ENCODE measurements at regions of chr18 and their contacts with region 1.

Region 1: DNA sequence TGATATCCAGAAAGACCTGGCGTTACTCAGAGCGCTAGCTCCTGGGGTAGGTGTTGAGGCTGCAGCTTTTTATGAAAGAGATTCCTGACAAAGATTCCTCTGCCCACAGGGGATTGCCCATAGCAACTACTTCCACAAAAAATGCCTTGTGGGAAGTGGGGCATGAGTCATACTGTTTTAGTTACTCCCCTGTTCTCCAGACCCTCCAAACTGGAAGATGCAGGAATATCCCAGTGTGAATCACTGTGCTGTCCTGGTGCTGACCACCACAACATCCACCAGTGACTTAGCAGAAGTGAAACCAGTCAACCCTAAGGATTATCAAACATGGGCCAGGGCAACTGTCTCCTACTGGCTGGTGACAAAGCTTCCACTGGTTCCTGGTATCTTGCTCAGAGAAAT is 61.8 kb downstream of the CDH2 start:
- DNase-seq: peak; percentile 39 to 40
- H3K4me3 ChIP-seq: no peak overlapping the region
- H3K27ac ChIP-seq: peak overlapping the region; percentile 53
- H3K4me1 ChIP-seq: peaks cover 31% of the 10 kb centered on the region
- H3K27me3 ChIP-seq: no peaks in the 10 kb centered on the region
- CTCF ChIP-seq: no peak

Region 2: DNA sequence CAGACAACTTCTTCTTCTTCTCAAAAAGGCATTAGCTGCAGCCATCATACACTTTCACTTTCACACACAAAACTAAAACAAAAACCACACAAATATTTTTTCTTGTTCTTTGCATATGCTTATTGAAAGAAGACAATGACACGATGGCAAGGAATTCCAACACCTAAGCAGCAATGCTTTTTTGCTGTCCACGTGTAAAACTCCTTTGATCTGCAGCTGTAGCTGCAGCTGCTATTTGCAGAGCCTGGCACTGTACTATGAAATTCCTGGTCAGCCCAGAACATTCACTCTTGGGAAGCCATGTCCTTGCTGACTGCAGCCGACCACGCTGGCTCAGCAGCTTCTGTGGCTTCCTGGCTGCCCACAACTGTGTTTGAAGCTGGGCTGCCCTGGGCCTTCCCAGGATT is 254.4 kb before region 1 on chr18:
- CTCF ChIA-PET with region 1: no interaction called
- POLR2A ChIA-PET with region 1: no interaction called
- intact Hi-C with region 1: loop called (anchors 10 kb)
- DNase-seq: no peak
- H3K4me3 ChIP-seq: no peak overlapping the region
- H3K27ac ChIP-seq: no peak overlapping the region
- H3K4me1 ChIP-seq: no peaks in the 10 kb centered on the region
- H3K27me3 ChIP-seq: no peaks in the 10 kb centered on the region
- CTCF ChIP-seq: no peak

Region 3: DNA sequence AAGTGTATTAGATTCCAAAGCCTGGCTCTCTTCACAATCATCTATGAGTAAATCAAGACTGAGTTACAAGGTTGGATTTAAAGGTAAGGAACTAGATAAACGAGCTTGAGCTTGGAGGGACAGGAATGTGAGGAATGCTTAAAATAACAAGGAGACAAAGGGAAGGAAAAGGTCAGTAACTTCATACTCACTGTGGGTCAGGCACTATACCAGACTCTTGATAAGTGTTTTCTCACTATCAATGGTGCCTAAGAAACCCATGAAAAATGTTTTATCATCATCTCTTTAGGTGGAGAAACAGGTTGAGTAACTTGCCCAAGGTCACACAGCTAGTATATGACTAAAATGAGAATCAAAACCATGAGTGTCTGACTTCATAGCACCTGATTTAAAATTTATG is 150.3 kb before region 1 on chr18:
- CTCF ChIA-PET with region 1: no interaction called
- POLR2A ChIA-PET with region 1: no interaction called
- intact Hi-C with region 1: loop called (anchors 10 kb)
- DNase-seq: peak; percentile 7 to 39
- H3K4me3 ChIP-seq: no peak overlapping the region
- H3K27ac ChIP-seq: no peak overlapping the region
- H3K4me1 ChIP-seq: no peaks in the 10 kb centered on the region
- H3K27me3 ChIP-seq: no peaks in the 10 kb centered on the region
- CTCF ChIP-seq: no peak

Region 4: GRCh38 chr18:28143725-28144124 is 28.6 kb after region 1 on chr18:
- CTCF ChIA-PET with region 1: no interaction called
- POLR2A ChIA-PET with region 1: no interaction called
- intact Hi-C with region 1: no loop called
- DNase-seq: no peak
- H3K4me3 ChIP-seq: no peak overlapping the region
- H3K27ac ChIP-seq: no peak overlapping the region
- H3K4me1 ChIP-seq: no peaks in the 10 kb centered on the region
- H3K27me3 ChIP-seq: no peaks in the 10 kb centered on the region
- CTCF ChIP-seq: no peak

Region 5: GRCh38 chr18:28176933-28177827 is 62.0 kb after region 1 on chr18 and contains the start of gene CDH2:
- CTCF ChIA-PET with region 1: no interaction called
- POLR2A ChIA-PET with region 1: no interaction called
- intact Hi-C with region 1: loop called (anchors 2 kb)
- DNase-seq: peak in 1 of 2 experiments; percentile 16
- H3K4me3 ChIP-seq: no peak within 1 kb of the TSS
- H3K27ac ChIP-seq: no peak within 1 kb of the TSS
- H3K4me1 ChIP-seq: no peaks in the 10 kb centered on the region
- H3K27me3 ChIP-seq: no peaks in the 10 kb centered on the region
- CTCF ChIP-seq: no peak
- total RNA-seq, gene CDH2: 6.4 and 8.5 TPM in 2 replicates

Region 6: GRCh38 chr18:28823506-28824182 is 708.5 kb after region 1 on chr18:
- CTCF ChIA-PET with region 1: no interaction called
- POLR2A ChIA-PET with region 1: no interaction called
- intact Hi-C with region 1: no loop called
- DNase-seq: no peak
- H3K4me3 ChIP-seq: no peak overlapping the region
- H3K27ac ChIP-seq: no peak overlapping the region
- H3K4me1 ChIP-seq: 0 out of 2 replicates have a peak, but pooled peaks cover 5% of the 10 kb centered on the region
- H3K27me3 ChIP-seq: no peaks in the 10 kb centered on the region
- CTCF ChIP-seq: no peak

Measured in PC-9 (cell line).